Sigmoid colon (tissue), 7 donors: ENCODE measurements at regions of chr16 and their contacts with region 1.

Region 1: GRCh38 chr16:15643048-15643945 is at the start of gene MARF1:
- DNase-seq: peak; percentile 99
- H3K4me3 ChIP-seq: peak within 1 kb of the TSS; percentile 71 to 94 (median 80)
- H3K27ac ChIP-seq: peak within 1 kb of the TSS; percentile 96 to 100 (median 99)
- H3K4me1 ChIP-seq: peaks cover 0 to 34% (median 25%) of the 10 kb centered on the region in 4 donors
- H3K27me3 ChIP-seq: no peaks in the 10 kb centered on the region
- CTCF ChIP-seq: peak; percentile 41 to 59 (median 44)
- EP300 ChIP-seq: peak in 1 of 4 donors; percentile 61
- POLR2A ChIP-seq: peak; percentile 99
- total RNA-seq, gene MARF1: 43.8 to 76.7 (median 54.8) TPM

Region 2: DNA sequence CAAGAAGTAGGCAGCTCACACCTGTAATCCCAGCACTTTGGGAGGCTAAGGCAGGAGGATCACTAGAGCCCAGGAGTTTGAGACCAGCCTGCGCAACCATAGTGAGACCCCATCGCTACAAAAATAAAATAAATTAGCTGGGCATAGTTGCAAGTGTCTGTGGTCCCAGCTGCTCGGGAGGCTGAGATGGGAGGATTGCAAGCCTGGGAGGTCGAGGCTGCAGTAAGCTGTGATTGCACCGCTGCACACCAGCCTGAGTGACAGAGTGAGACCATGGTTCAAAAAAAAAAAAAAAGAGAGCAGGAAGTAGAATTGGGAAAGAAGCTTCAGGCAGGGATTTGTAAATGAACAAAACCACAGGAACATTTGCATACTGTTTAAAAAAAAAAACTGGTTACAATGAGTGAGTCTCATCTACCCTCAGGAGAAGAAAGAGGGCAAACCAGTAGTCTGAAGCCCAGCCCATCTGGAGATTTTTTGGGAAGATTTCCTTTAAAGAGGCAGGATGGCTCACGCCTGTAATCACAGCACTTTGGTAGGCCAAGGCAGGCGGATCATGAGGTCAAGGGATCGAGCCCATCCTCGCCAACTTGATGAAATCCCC is 239.8 kb before region 1 on chr16:
- intact Hi-C with region 1: no loop called
- DNase-seq: no peak
- H3K4me3 ChIP-seq: no peak overlapping the region
- H3K27ac ChIP-seq: no peak overlapping the region
- H3K4me1 ChIP-seq: no peaks in the 10 kb centered on the region
- H3K27me3 ChIP-seq: no peaks in the 10 kb centered on the region
- CTCF ChIP-seq: no peak
- EP300 ChIP-seq: no peak
- POLR2A ChIP-seq: no peak

Region 3: DNA sequence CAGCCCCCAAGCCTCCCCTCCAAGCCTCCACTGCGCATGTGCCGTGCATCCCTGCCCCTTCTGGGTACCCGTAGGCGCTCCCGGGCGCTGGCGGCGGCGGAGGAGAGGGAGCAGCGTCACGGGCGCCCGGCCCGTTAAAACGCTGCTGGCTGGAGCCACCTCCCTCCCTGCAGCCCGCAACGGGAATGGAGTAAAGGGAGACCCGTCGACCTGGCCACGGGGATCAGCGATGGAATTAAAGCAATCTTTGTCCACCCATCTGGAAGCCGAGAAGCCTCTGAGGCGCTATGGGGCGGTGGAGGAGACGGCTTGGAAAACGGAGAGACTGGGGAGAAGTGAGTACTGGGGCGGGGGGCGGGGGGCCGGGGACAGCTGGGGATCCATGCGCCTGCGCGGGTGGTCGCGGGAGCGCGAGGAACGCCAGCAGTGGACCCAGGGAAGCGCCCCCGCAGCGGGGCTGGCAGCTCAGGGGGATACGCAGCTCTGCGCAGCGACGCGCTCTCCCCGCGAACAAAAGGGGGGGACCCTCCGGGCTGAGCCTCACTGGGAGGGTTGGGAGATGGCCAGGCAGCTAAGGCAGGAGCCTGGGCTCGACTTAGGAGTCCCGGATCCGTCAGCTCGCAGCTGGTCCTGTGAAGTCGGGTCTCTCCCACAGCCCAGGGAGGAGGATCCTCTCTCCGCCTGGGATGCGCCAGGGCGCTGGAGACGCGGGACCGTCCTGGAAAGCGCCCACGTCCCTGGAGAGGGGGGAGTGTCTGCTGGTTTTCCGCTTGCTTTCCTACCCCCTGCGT is 208.7 kb before region 1 on chr16 and contains the start of gene BMERB1:
- intact Hi-C with region 1: loop called (anchors 10 kb)
- DNase-seq: peak; percentile 88
- H3K4me3 ChIP-seq: peak within 1 kb of the TSS; percentile 60 to 94 (median 94)
- H3K27ac ChIP-seq: peak within 1 kb of the TSS; percentile 84 to 90 (median 87)
- H3K4me1 ChIP-seq: peaks cover 0 to 23% (median 17%) of the 10 kb centered on the region in 4 donors
- H3K27me3 ChIP-seq: no peaks in the 10 kb centered on the region
- CTCF ChIP-seq: no peak
- EP300 ChIP-seq: no peak
- POLR2A ChIP-seq: peak; percentile 49 to 62
- total RNA-seq, gene BMERB1: 63.4 to 112 (median 86.3) TPM

Region 4: GRCh38 chr16:15553313-15554088 is 89.8 kb before region 1 on chr16:
- intact Hi-C with region 1: no loop called
- DNase-seq: no peak
- H3K4me3 ChIP-seq: no peak overlapping the region
- H3K27ac ChIP-seq: no peak overlapping the region
- H3K4me1 ChIP-seq: peaks cover 0 to 10% (median 0%) of the 10 kb centered on the region in 4 donors
- H3K27me3 ChIP-seq: no peaks in the 10 kb centered on the region
- CTCF ChIP-seq: no peak
- EP300 ChIP-seq: no peak
- POLR2A ChIP-seq: no peak

Region 5: DNA sequence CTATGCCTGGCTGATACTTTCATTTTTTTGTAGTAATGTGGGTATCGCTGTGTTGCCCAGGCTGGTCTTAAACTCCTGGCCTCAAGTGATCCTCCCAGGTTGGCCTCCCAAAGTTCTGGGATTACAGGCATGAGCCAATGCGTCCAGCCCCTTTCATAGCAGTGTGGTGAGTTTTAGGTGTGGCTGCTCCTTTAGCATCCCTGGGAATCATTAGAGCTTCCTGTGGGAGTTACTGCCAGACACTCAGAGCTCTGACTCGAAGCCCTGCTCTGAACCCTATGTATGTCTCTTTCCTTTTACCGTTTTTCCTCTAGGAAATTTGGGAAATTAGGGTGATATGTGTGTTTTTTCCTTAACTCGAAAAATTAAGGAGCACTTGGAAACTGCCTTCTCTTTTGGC is 51.2 kb after region 1 on chr16:
- intact Hi-C with region 1: no loop called
- DNase-seq: no peak
- H3K4me3 ChIP-seq: no peak overlapping the region
- H3K27ac ChIP-seq: no peak overlapping the region
- H3K4me1 ChIP-seq: no peaks in the 10 kb centered on the region
- H3K27me3 ChIP-seq: no peaks in the 10 kb centered on the region
- CTCF ChIP-seq: no peak
- EP300 ChIP-seq: no peak
- POLR2A ChIP-seq: no peak